ENCODE measurements at regions of chr6 and their contacts with region 1.

Region 1: DNA sequence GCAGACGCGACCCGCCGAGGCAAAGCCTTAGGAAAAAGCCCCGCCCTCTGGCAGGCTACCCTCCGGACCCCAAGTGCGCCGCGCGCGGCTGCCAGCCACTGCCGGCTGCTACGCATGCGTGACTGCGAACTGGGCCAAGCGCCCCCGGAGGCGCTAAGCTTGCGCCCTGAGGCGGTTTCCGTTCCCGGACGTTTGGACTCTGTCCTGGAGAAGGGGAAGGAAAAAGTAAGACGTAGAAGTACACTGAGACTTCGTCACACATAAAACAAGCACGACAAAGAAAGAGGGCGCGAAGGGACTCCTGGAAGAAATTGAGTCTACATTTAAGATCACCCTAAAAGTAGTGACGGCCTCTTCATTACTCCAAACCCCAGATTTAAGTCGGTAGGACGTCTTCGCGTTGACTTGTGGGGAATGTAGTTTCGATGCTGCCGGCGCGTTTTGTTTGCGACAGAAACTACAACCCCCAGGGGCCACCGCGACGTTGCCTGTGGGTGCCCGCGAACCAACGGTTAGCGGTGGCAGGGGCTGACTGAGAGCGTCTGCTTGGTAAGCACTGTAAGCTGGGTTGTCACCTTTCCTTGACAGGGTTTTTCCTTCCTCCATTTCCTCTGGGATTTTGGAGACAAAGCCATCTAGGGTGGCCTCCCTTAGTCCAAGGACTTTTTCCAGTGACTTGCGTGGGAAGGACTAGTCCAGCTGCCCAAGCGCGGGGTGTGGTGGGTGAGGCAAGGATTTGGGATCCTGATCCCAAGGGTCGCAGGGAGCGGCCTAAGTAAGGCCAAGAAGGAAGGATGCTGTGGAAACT is at the start of gene CEP57L1:
- DNase-seq: peak; percentile 96
- H3K4me3 Mint-ChIP-seq: peak within 1 kb of the TSS; percentile 92
- H3K27ac Mint-ChIP-seq: peak within 1 kb of the TSS; percentile 99
- H3K4me1 Mint-ChIP-seq: peaks cover 59% of the 10 kb centered on the region
- H3K27me3 Mint-ChIP-seq: no peaks in the 10 kb centered on the region
- total RNA-seq, gene CEP57L1: 17.1 to 22.5 TPM

Region 2: GRCh38 chr6:109082188-109082577 is 13.0 kb before region 1 on chr6:
- CTCF ChIA-PET with region 1: interaction called, 10 read pairs
- POLR2A ChIA-PET with region 1: no interaction called
- DNase-seq: no peak
- H3K4me3 Mint-ChIP-seq: no peak overlapping the region
- H3K27ac Mint-ChIP-seq: no peak overlapping the region
- H3K4me1 Mint-ChIP-seq: no peaks in the 10 kb centered on the region
- H3K27me3 Mint-ChIP-seq: peaks cover 2% of the 10 kb centered on the region